SK-N-SH (cell line): ENCODE measurements at regions of chr16 and their contacts with region 1.

Region 1: DNA sequence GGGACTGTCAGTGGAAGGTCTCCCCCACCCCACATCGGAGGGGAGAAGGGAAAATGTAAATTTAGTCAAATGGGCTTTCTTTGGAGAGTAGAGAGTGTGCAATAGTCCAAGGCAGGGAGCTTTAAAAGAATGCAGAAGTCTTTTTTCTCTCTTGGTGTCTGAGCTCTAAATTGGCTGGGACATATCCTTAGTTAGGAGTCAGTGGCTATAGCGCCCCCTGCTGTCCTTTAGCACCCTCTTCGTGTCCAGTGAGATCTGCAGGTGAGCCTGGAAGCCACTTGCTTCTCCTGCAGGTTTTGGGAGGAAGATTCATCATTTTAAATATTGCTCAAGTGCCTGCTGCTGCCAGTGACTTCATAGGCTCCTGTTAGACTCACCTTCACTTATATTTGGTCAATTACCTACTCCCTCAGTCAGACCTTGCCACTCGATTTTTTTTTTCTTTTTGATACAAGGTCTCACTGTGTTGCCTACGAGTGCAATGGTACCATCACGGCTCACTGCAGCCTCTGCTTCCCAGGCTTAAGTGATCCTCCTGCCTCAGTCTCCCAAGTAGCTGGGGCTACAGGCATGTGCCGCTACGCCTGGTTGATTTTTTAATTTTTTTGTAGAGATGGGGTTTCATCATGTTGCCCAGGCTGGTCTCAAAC is 174.8 kb downstream of the PRKCB start:
- DNase-seq: peak; percentile 65
- H3K4me3 ChIP-seq: no peak overlapping the region; a peak in 1 of 4 replicates
- H3K27ac ChIP-seq: no peak overlapping the region
- H3K4me1 ChIP-seq: peaks cover 0 to 6% of the 10 kb centered on the region in 2 experiments; a peak in 2 of 4 replicates
- H3K27me3 ChIP-seq: no peaks in the 10 kb centered on the region
- CTCF ChIP-seq: peak; percentile 74
- EP300 ChIP-seq: no peak
- RAD21 ChIP-seq: peak; percentile 75

Region 2: GRCh38 chr16:23796941-23797340 is 213.6 kb before region 1 on chr16:
- CTCF ChIA-PET with region 1: interaction called, 47 read pairs
- POLR2A ChIA-PET with region 1: no interaction called
- DNase-seq: no peak
- H3K4me3 ChIP-seq: no peak overlapping the region
- H3K27ac ChIP-seq: no peak overlapping the region
- H3K4me1 ChIP-seq: no peaks in the 10 kb centered on the region
- H3K27me3 ChIP-seq: no peaks in the 10 kb centered on the region; the same call in 1 of the 2 replicates
- CTCF ChIP-seq: no peak
- EP300 ChIP-seq: no peak
- RAD21 ChIP-seq: no peak

Region 3: GRCh38 chr16:23803591-23804123 is 206.9 kb before region 1 on chr16:
- CTCF ChIA-PET with region 1: interaction called, 47 read pairs
- POLR2A ChIA-PET with region 1: no interaction called
- DNase-seq: peak; percentile 66
- H3K4me3 ChIP-seq: peak overlapping the region in 1 of 2 experiments; percentile 1; a peak in 1 of 4 replicates
- H3K27ac ChIP-seq: no peak overlapping the region
- H3K4me1 ChIP-seq: peaks cover 0 to 5% of the 10 kb centered on the region in 2 experiments; a peak in 1 of 4 replicates
- H3K27me3 ChIP-seq: no peaks in the 10 kb centered on the region; the same call in 1 of the 2 replicates
- CTCF ChIP-seq: peak; percentile 55
- EP300 ChIP-seq: no peak
- RAD21 ChIP-seq: peak; percentile 59

Region 4: DNA sequence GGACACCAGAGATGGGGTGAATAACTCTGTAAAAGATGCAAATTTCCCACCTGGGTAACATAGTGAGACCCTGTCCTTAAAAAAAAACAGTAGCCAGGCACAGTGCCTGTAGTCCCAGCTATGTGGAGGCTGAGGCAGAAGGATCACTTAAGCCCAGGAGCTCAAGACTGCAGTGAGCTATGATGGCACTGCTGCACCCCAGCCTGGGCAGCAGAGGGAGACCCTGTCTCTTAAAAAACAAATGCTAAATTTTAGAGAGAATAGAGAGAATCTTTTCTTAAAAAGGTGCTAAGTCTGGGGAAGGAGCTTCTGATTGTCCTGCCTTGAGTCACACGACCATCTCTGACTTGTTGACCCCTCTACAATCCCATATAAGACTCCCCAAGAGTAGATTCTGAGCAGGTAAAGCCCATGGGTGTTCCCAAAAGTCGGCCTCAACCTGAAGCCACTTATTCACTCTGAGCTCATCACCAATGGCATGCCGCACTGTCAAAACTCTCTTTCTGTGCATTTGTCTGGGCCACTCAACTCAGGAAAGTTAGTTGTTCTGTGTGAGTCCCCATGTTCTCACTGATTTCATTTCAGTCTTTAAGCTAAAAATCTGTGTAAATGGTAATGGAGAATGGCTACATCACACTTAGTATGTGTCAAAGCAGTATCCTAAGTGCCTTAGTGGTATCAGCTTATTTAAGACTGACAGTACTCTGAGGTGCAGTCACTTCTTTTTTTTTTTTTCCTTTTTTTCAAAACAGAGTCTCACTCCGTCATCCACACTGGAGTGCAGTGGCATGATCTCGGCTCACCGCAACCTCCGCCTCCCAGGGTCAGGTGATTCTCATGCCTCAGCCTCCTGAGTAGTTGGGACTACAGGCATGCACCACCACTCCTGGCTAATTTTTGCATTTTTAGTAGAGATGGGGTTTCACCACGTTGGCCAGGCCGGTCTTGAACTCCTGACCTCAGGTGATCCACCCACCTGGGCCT is 133.2 kb before region 1 on chr16:
- CTCF ChIA-PET with region 1: interaction called, 18 read pairs
- POLR2A ChIA-PET with region 1: no interaction called
- DNase-seq: no peak
- H3K4me3 ChIP-seq: no peak overlapping the region
- H3K27ac ChIP-seq: no peak overlapping the region
- H3K4me1 ChIP-seq: no peaks in the 10 kb centered on the region; a peak in 1 of 4 replicates
- H3K27me3 ChIP-seq: no peaks in the 10 kb centered on the region
- CTCF ChIP-seq: no peak
- EP300 ChIP-seq: no peak
- RAD21 ChIP-seq: peak; percentile 26; the same call in 1 of the 2 replicates

Region 5: GRCh38 chr16:23941025-23941424 is 69.5 kb before region 1 on chr16:
- CTCF ChIA-PET with region 1: no interaction called
- POLR2A ChIA-PET with region 1: no interaction called
- DNase-seq: no peak
- H3K4me3 ChIP-seq: no peak overlapping the region
- H3K27ac ChIP-seq: no peak overlapping the region
- H3K4me1 ChIP-seq: peaks cover 0 to 26% of the 10 kb centered on the region in 2 experiments; a peak in 1 of 4 replicates
- H3K27me3 ChIP-seq: no peaks in the 10 kb centered on the region
- CTCF ChIP-seq: no peak
- EP300 ChIP-seq: no peak
- RAD21 ChIP-seq: no peak

Region 6: GRCh38 chr16:23999663-24000062 is 10.9 kb before region 1 on chr16:
- CTCF ChIA-PET with region 1: interaction called, 16 read pairs
- POLR2A ChIA-PET with region 1: no interaction called
- DNase-seq: no peak
- H3K4me3 ChIP-seq: no peak overlapping the region
- H3K27ac ChIP-seq: no peak overlapping the region
- H3K4me1 ChIP-seq: no peaks in the 10 kb centered on the region
- H3K27me3 ChIP-seq: no peaks in the 10 kb centered on the region
- CTCF ChIP-seq: no peak
- EP300 ChIP-seq: no peak
- RAD21 ChIP-seq: no peak

Region 7: GRCh38 chr16:24036614-24037013 is 26.0 kb after region 1 on chr16:
- CTCF ChIA-PET with region 1: interaction called, 17 read pairs
- POLR2A ChIA-PET with region 1: no interaction called
- DNase-seq: peak; percentile 79
- H3K4me3 ChIP-seq: no peak overlapping the region; a peak in 1 of 4 replicates
- H3K27ac ChIP-seq: no peak overlapping the region
- H3K4me1 ChIP-seq: no peaks in the 10 kb centered on the region
- H3K27me3 ChIP-seq: no peaks in the 10 kb centered on the region
- CTCF ChIP-seq: peak; percentile 66
- EP300 ChIP-seq: no peak
- RAD21 ChIP-seq: peak; percentile 94

Region 8: GRCh38 chr16:24070851-24071250 is 60.3 kb after region 1 on chr16:
- CTCF ChIA-PET with region 1: no interaction called
- POLR2A ChIA-PET with region 1: no interaction called
- DNase-seq: peak; percentile 67
- H3K4me3 ChIP-seq: peak overlapping the region in 1 of 2 experiments; percentile 39; a peak in 1 of 4 replicates
- H3K27ac ChIP-seq: no peak overlapping the region
- H3K4me1 ChIP-seq: peaks cover 0 to 4% of the 10 kb centered on the region in 2 experiments; a peak in 2 of 4 replicates
- H3K27me3 ChIP-seq: no peaks in the 10 kb centered on the region
- CTCF ChIP-seq: peak; percentile 46
- EP300 ChIP-seq: no peak
- RAD21 ChIP-seq: peak; percentile 70